Left ventricle myocardium inferior (tissue), 1 donor: ENCODE measurements at regions of chr9 and their contacts with region 1.

Region 1: DNA sequence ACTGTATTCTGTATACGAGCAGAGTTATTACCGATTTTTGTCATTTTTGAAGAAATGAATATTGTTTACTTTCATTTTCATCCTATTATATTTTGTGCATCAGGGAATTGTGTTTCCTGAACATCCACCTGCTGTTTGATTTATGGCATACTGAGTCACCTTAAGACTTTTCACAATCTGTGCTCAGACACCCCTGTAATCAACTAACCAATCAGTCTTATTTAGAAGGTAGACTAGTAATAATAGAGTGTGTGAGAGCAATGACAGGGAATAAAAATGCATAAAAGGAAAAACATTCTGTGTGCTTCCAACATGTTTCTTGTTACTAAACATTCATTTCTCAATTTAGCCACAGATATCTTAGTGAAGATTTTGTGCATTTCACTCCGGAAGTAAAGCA is 1413.6 kb upstream of the ACO1 start:
- DNase-seq: no peak
- H3K4me3 ChIP-seq: no peak overlapping the region
- H3K27ac ChIP-seq: no peak overlapping the region
- H3K4me1 ChIP-seq: no peaks in the 10 kb centered on the region
- H3K27me3 ChIP-seq: no peaks in the 10 kb centered on the region
- CTCF ChIP-seq: no peak

Region 2: DNA sequence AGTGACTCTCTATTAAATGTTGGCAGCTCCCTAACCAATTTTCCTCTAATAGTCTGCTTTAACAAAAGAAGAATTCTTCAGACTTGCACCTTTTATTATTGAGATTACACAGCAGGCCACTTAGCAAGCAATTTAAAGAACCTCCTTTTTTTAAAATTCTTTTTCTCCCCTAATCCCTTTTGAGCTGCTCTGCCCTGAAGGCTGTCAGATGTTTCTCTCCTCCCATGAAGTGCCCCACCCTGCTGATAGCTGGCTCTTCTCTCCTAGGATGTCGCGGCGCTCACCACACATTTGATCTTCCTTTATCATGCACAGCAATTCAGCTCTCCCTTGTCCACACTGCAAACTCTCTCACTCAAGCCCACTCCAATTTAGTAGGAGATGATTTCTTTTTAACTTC is 57.5 kb before region 1 on chr9:
- intact Hi-C with region 1: loop called (anchors 10 kb)
- DNase-seq: no peak
- H3K4me3 ChIP-seq: no peak overlapping the region
- H3K27ac ChIP-seq: no peak overlapping the region
- H3K4me1 ChIP-seq: no peaks in the 10 kb centered on the region
- H3K27me3 ChIP-seq: no peaks in the 10 kb centered on the region
- CTCF ChIP-seq: no peak

Region 3: DNA sequence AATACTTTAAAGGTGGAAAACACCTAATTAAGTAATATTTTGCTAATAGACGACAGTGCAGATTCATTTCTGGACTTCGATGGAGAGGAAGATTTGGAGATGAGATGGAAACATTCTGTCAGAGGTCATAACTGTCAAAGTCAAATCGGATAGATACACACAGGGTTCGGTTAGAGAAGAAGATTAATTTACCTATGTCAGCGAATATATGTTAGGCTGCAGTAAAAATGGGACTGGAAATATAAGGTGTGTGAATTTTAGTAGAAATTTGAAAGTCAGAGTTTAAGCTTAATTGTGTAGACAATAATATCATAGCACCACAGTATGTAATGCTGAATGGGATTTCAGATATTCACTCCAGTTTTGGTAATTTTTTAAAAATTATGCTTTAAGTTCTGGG is 393.4 kb after region 1 on chr9:
- intact Hi-C with region 1: no loop called
- DNase-seq: no peak
- H3K4me3 ChIP-seq: no peak overlapping the region
- H3K27ac ChIP-seq: no peak overlapping the region
- H3K4me1 ChIP-seq: no peaks in the 10 kb centered on the region
- H3K27me3 ChIP-seq: no peaks in the 10 kb centered on the region
- CTCF ChIP-seq: no peak